ENCODE measurements at regions of chr11 and their contacts with region 1.

Region 1: DNA sequence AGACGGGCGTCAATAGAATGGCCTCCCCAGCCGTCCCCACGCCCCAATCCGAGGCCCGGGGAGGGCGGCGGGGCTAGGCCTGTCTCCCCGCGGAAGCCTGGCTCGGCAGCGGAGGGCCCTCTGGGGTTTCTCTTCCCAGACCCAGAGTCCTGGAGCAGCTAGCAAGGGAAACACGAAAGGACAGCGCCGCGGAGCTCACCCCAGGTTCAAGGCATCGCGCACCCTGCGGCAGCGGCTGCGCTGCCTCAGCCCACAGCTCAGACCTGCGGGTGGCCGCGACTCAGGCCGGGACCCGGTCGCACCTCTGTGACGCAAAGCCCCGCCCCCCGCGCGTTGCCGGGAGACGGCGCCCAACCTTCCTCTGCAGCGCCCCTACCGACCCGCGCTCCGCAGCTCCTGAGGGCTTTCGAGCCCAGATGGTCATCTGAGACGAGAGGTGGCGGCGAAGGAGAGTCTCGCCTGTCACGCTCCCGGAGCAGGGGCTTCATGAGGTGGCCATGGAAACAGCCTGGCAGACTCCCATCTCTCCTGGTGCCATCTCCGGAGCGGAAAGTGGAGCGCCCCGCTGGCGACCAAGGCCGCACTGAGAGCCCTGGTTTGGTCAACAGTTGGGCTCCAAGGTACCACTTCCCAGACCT is at the start of gene RNF141:
- DNase-seq: peak; percentile 99
- H3K4me3 Mint-ChIP-seq: peak within 1 kb of the TSS; percentile 92
- H3K27ac Mint-ChIP-seq: peak within 1 kb of the TSS; percentile 78
- H3K4me1 Mint-ChIP-seq: peaks cover 14% of the 10 kb centered on the region
- H3K27me3 Mint-ChIP-seq: peaks cover 3% of the 10 kb centered on the region
- total RNA-seq, gene RNF141: 14.3 and 15.4 TPM in 2 replicates

Region 2: DNA sequence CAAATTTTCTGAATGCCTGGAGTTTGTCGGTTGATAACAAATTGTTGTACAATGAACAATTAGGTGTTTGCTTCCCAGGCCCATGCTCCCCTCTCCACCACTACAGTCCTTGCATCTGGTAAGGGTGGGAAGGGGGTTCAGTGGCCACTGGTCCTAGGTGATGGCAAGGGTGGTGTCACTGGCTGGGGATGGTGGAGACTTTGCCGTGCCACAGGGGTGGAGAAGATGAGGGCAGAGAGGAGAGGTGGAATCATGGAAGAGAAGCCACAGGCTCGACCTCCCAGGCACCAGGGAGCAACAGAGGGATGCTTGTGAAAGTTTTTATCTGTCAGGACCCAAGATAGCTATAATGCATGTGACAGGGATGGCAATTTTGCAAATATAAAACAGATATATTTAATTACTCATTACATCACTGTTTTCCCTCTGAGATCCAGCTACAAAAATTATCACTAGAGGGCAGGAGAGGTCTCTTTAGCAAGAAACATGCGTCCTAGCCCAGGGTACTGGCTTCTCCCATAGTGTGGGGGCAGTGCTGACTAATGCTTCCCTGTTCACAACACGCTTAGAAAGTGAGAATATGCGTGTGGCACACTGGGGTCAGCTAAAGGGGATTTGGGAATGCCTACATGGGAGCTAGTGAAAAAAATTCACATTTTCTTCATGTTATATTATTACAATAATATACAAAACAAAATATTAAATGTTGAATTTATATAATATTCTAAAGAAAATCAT is 135.0 kb before region 1 on chr11:
- intact Hi-C with region 1: loop called (anchors 2 kb)
- DNase-seq: peak; percentile 83
- H3K4me3 Mint-ChIP-seq: no peak overlapping the region
- H3K27ac Mint-ChIP-seq: no peak overlapping the region
- H3K4me1 Mint-ChIP-seq: peaks cover 18% of the 10 kb centered on the region
- H3K27me3 Mint-ChIP-seq: peaks cover 3% of the 10 kb centered on the region

Region 3: DNA sequence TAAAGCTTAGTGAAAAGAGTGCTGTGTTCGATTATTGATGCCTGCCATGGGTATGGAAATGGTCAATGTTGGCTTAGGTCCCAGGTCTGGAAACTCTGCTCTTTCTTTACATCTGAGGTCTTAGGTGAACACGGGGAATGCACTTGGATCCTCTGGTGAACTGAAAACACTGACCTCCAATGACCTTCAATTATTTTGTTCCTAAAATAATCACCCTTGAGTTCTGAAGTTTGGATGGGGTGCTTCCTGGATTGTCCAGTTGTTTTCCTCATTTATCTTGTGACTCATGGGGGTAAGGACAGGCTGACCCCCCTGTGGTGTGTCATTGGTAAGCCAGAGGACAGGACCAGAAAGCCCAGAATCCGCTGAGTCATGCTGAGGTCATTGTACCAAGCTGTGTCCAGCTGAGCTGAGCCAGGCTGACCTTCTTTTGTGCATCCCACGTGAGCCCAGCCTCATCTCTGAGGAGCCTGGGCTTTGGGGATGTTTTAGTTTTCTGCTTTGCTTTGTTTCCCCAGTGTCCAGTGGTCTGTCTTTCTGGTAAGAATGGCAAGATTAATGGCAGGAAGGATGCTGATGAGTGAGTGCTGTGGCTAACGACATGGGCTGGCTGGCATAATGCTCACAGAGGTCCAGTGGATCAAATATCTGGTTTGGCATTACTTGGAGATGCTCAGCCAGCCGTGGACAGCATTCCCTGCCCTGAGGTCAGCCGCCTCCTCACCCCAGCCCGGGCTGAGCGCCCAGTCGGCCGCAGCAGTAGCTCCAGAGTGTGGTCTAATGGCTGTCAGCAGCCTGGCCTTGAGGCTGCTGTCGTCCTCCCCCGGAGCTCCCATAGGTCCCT is 50.4 kb before region 1 on chr11:
- intact Hi-C with region 1: no loop called
- DNase-seq: no peak
- H3K4me3 Mint-ChIP-seq: no peak overlapping the region
- H3K27ac Mint-ChIP-seq: no peak overlapping the region
- H3K4me1 Mint-ChIP-seq: peaks cover 15% of the 10 kb centered on the region
- H3K27me3 Mint-ChIP-seq: no peaks in the 10 kb centered on the region

Region 4: GRCh38 chr11:10526974-10527918 is 13.8 kb before region 1 on chr11:
- intact Hi-C with region 1: loop called (anchors 2 kb)
- DNase-seq: no peak
- H3K4me3 Mint-ChIP-seq: peak overlapping the region; percentile 30
- H3K27ac Mint-ChIP-seq: peak overlapping the region; percentile 53
- H3K4me1 Mint-ChIP-seq: peaks cover 18% of the 10 kb centered on the region
- H3K27me3 Mint-ChIP-seq: no peaks in the 10 kb centered on the region

Region 5: GRCh38 chr11:10568486-10568941 is 27.5 kb after region 1 on chr11 and contains the start of gene LYVE1:
- intact Hi-C with region 1: no loop called
- DNase-seq: no peak
- H3K4me3 Mint-ChIP-seq: no peak within 1 kb of the TSS
- H3K27ac Mint-ChIP-seq: no peak within 1 kb of the TSS
- H3K4me1 Mint-ChIP-seq: no peaks in the 10 kb centered on the region
- H3K27me3 Mint-ChIP-seq: peaks cover 26% of the 10 kb centered on the region
- total RNA-seq, gene LYVE1: not detected in 2 replicates

Region 6: GRCh38 chr11:10653926-10654810 is 113.1 kb after region 1 on chr11:
- intact Hi-C with region 1: loop called (anchors 2 kb)
- DNase-seq: peak; percentile 80
- H3K4me3 Mint-ChIP-seq: no peak overlapping the region
- H3K27ac Mint-ChIP-seq: no peak overlapping the region
- H3K4me1 Mint-ChIP-seq: peaks cover 25% of the 10 kb centered on the region
- H3K27me3 Mint-ChIP-seq: no peaks in the 10 kb centered on the region

Region 7: DNA sequence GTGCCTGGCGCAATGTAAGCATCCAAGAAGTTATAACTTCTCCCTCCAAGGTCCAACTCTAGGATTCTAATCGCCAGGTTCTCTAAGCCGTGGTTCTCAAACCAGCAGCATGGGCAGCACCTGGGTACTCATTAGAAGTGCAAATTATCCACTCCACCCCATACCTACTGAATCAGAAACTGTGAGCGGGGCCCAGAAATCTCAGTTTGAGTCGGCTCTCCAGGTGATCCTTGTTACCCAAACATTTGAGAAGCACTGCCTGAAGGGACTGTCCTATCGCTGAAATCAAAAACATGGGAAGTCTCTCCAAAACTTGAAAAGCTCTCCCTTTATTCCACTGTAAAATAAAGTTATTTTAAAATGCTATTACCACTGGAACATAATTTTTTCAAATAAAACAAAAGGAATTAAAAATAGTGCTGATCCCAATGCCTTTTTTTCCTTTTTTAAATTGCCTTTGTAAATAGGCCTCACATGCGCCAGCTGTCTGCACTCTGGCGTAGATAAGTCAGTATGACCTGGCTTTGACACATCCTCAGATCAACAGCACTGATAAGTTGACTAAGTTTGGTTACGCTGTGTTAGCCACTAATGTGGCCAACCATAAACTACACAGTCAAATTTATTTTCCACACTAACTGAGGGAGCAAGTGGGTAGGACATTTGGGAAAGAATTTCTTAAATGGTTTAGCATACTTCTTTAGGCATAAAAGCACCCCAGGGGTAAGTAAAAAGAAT is 201.6 kb after region 1 on chr11:
- intact Hi-C with region 1: loop called (anchors 2 kb)
- DNase-seq: peak; percentile 73
- H3K4me3 Mint-ChIP-seq: peak overlapping the region; percentile 66
- H3K27ac Mint-ChIP-seq: peak overlapping the region; percentile 49
- H3K4me1 Mint-ChIP-seq: peaks cover 22% of the 10 kb centered on the region
- H3K27me3 Mint-ChIP-seq: peaks cover 2% of the 10 kb centered on the region